IMR-90 (cell line): ENCODE measurements at regions of chr3 and their contacts with region 1.

Region 1: DNA sequence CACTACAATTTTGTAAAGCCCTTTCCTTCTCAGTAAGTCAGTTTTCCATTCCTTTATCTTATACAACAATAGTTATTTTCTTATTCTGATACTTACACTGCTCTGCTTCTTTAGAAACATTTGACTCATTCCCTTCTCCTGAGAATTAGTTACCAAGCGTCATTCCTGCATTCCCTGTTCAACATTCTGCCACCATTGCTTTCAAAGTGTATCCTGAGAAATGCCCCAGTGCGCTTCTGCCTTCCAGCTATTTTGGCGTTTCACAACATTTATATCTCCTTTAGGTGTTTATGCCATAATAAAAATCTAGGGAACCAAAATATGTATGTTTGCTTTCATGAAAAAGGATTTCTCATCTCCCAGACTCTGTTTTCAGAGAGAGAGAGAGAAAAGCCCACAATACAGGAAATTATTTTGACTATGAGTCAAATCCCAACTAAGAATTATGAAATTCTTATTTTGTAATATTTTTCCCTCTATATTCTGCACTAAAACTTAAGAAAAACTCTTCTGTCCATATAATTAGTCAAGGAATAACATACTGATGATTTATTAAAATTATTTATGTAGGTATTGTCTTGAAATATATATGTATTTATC is 118.2 kb upstream of the RAP2B start:
- DNase-seq: peak; percentile 50
- ATAC-seq: peak; percentile 22; the same call in 1 of the 2 replicates
- H3K4me3 ChIP-seq: no peak overlapping the region
- H3K27ac ChIP-seq: no peak overlapping the region
- H3K4me1 ChIP-seq: peaks cover 2% of the 10 kb centered on the region
- H3K27me3 ChIP-seq: no peaks in the 10 kb centered on the region
- CTCF ChIP-seq: no peak
- POLR2A ChIP-seq: no peak
- RAD21 ChIP-seq: no peak

Region 2: DNA sequence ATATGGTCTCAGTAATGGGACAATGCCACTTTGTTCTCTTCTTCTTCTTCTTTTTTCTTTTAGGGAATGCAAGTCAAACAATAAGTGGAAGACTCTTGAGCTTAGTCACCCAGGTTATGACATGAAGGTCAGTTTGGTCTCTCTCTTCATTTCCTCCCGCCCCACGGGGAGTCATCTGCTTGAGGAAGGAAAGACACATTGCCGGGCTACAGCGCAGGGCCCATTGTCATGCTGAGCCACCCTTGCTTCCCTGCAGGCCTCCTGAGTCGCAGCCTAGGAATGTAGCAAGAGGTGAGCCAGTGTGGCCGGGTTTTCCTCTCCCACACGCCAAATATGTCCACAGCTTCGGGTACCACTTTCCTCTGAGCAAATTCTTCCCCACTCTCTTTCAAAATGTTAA is 165.8 kb after region 1 on chr3:
- CTCF ChIA-PET with region 1: no interaction called
- POLR2A ChIA-PET with region 1: interaction called, 20 read pairs
- dilution Hi-C with region 1: no loop called
- in situ Hi-C with region 1: no loop called
- intact Hi-C with region 1: loop called (anchors 1 kb)
- DNase-seq: peak; percentile 78
- ATAC-seq: peak; percentile 89
- H3K4me3 ChIP-seq: no peak overlapping the region
- H3K27ac ChIP-seq: peak overlapping the region; percentile 24; the same call in 1 of the 2 replicates
- H3K4me1 ChIP-seq: peaks cover 1% of the 10 kb centered on the region
- H3K27me3 ChIP-seq: no peaks in the 10 kb centered on the region
- CTCF ChIP-seq: no peak
- POLR2A ChIP-seq: no peak
- RAD21 ChIP-seq: no peak

Region 3: DNA sequence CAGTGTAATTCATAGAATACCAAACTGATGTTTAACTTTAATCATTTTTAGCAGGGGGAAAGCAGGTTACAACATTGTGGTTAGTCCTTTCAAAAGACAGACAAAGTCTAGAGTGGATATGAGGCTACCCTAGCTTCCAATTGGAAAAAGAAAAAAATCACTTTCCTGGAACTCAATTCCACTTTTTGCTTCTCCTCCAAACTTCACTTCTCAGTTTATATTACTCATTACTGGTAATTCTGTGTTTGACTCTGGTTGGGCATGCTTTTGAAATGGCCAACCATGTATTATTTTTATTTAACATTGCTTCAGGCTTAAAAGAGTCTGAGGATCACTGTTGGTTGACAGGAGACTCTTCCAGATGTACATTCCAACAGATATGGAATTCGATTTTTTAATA is 203.0 kb after region 1 on chr3:
- CTCF ChIA-PET with region 1: no interaction called
- POLR2A ChIA-PET with region 1: no interaction called
- dilution Hi-C with region 1: no loop called
- in situ Hi-C with region 1: no loop called
- intact Hi-C with region 1: loop called (anchors 5 kb)
- DNase-seq: peak; percentile 89
- ATAC-seq: peak; percentile 77
- H3K4me3 ChIP-seq: no peak overlapping the region
- H3K27ac ChIP-seq: peak overlapping the region; percentile 20; the same call in 1 of the 2 replicates
- H3K4me1 ChIP-seq: peaks cover 7% of the 10 kb centered on the region
- H3K27me3 ChIP-seq: no peaks in the 10 kb centered on the region
- CTCF ChIP-seq: no peak
- POLR2A ChIP-seq: no peak
- RAD21 ChIP-seq: no peak

Region 4: GRCh38 chr3:153295901-153296300 is 252.1 kb after region 1 on chr3:
- CTCF ChIA-PET with region 1: no interaction called
- POLR2A ChIA-PET with region 1: no interaction called
- dilution Hi-C with region 1: no loop called
- in situ Hi-C with region 1: no loop called
- intact Hi-C with region 1: loop called (anchors 5 kb)
- DNase-seq: peak; percentile 77
- ATAC-seq: peak; percentile 71
- H3K4me3 ChIP-seq: no peak overlapping the region
- H3K27ac ChIP-seq: no peak overlapping the region
- H3K4me1 ChIP-seq: peaks cover 3% of the 10 kb centered on the region; the same call in 1 of the 2 replicates
- H3K27me3 ChIP-seq: no peaks in the 10 kb centered on the region
- CTCF ChIP-seq: no peak
- POLR2A ChIP-seq: no peak
- RAD21 ChIP-seq: no peak

Region 5: GRCh38 chr3:153443961-153444360 is 400.1 kb after region 1 on chr3:
- CTCF ChIA-PET with region 1: no interaction called
- POLR2A ChIA-PET with region 1: no interaction called
- dilution Hi-C with region 1: no loop called
- in situ Hi-C with region 1: no loop called
- intact Hi-C with region 1: loop called (anchors 10 kb)
- DNase-seq: peak; percentile 1
- ATAC-seq: no peak
- H3K4me3 ChIP-seq: no peak overlapping the region
- H3K27ac ChIP-seq: no peak overlapping the region
- H3K4me1 ChIP-seq: no peaks in the 10 kb centered on the region
- H3K27me3 ChIP-seq: no peaks in the 10 kb centered on the region
- CTCF ChIP-seq: peak; percentile 19; the same call in 1 of the 2 replicates
- POLR2A ChIP-seq: no peak
- RAD21 ChIP-seq: no peak

Region 6: DNA sequence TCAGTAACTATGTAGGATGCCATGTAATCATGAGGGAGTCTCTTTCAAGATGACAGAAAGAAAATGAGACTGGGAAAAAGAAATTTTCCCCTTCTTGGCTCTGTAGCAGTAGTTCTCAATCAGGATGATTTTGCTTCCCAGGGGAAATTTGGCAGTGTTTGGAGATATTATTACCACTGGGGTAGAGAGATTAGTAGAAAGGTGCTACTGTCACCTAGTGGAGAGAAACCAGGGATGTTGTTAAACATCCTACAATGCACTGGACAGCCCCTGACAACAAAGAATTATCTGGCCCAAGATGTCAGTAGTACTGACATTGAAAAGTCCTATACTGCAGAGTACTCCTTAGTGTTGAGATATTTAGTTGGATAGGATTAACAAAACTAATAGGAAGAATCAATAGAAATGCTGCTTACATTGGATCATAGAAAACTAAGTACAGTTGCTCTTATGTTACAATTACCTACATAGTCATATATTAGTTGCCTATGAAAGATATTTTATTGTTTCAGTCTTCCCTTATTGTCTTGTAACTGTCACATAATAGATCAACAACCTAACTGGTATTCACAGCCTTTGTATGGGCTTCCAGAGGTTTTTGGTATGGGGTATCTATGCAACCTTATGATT is 551.5 kb after region 1 on chr3:
- CTCF ChIA-PET with region 1: interaction called, 5 read pairs
- POLR2A ChIA-PET with region 1: no interaction called
- dilution Hi-C with region 1: no loop called
- in situ Hi-C with region 1: loop called (anchors 5 kb)
- intact Hi-C with region 1: loop called (anchors 1 kb)
- DNase-seq: peak; percentile 50
- ATAC-seq: peak; percentile 52; the same call in 1 of the 2 replicates
- H3K4me3 ChIP-seq: no peak overlapping the region
- H3K27ac ChIP-seq: no peak overlapping the region
- H3K4me1 ChIP-seq: 0 out of 2 replicates have a peak, but pooled peaks cover 2% of the 10 kb centered on the region
- H3K27me3 ChIP-seq: peaks cover 16% of the 10 kb centered on the region
- CTCF ChIP-seq: peak; percentile 75
- POLR2A ChIP-seq: no peak
- RAD21 ChIP-seq: peak; percentile 82

Region 7: GRCh38 chr3:153768561-153769469 is 725.0 kb after region 1 on chr3:
- CTCF ChIA-PET with region 1: no interaction called
- POLR2A ChIA-PET with region 1: no interaction called
- dilution Hi-C with region 1: no loop called
- in situ Hi-C with region 1: no loop called
- intact Hi-C with region 1: loop called (anchors 1 kb)
- DNase-seq: peak; percentile 61
- ATAC-seq: peak; percentile 100
- H3K4me3 ChIP-seq: no peak overlapping the region
- H3K27ac ChIP-seq: no peak overlapping the region
- H3K4me1 ChIP-seq: no peaks in the 10 kb centered on the region
- H3K27me3 ChIP-seq: no peaks in the 10 kb centered on the region
- CTCF ChIP-seq: peak; percentile 84
- POLR2A ChIP-seq: no peak
- RAD21 ChIP-seq: peak; percentile 87